A673 (cell line): ENCODE measurements at regions of chr5 and their contacts with region 1.

Region 1: DNA sequence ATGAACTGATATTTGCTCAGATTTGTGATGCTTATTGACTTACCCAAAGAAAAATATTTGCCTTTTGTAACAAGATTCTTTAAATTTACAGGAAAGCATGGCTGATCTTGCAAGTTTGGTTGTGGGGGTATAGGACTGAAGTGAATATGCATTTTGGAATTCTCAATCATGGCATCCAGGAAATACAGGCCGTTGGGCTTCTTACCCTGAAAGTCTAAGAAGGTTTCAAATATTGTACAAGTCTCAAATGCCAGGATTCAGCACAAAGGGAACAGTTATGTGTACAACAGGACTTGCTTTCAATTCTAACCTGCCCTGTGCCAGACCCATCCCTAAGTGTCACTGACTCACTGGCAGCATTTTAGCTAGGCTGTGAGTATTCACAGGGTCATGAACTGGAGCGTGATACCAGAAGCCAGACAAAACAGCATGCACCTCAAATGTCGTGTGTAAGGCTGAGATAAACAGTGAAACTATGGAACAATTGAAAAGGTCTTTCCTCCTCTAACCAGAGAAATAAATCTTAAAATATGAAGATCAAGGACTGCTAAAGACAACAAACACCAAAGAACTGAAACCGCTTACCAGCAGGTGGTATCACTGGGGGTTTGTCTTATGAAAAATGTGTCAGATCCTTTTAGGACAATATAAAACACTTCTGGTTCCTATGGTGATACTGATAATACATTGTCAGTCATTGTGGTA is 168.6 kb upstream of the RGMB start:
- DNase-seq: no peak
- H3K4me3 ChIP-seq: no peak overlapping the region
- H3K27ac ChIP-seq: no peak overlapping the region
- H3K4me1 ChIP-seq: no peaks in the 10 kb centered on the region
- H3K27me3 ChIP-seq: peaks cover 38% of the 10 kb centered on the region
- CTCF ChIP-seq: no peak

Region 2: GRCh38 chr5:99104538-99105132 is 499.8 kb after region 1 on chr5:
- CTCF ChIA-PET with region 1: interaction called, 12 read pairs
- POLR2A ChIA-PET with region 1: no interaction called
- intact Hi-C with region 1: no loop called
- DNase-seq: peak; percentile 63
- H3K4me3 ChIP-seq: no peak overlapping the region
- H3K27ac ChIP-seq: no peak overlapping the region
- H3K4me1 ChIP-seq: no peaks in the 10 kb centered on the region
- H3K27me3 ChIP-seq: peaks cover 2% of the 10 kb centered on the region
- CTCF ChIP-seq: peak; percentile 72